ENCODE measurements at regions of chr1 and their contacts with region 1.

Region 1: GRCh38 chr1:55277377-55278130 is 62.4 kb upstream of the USP24 start:
- DNase-seq: peak; percentile 89
- ATAC-seq: peak; percentile 92

Region 2: GRCh38 chr1:54705153-54705552 is 572.4 kb before region 1 on chr1:
- intact Hi-C with region 1: no loop called
- DNase-seq: no peak
- ATAC-seq: no peak

Region 3: DNA sequence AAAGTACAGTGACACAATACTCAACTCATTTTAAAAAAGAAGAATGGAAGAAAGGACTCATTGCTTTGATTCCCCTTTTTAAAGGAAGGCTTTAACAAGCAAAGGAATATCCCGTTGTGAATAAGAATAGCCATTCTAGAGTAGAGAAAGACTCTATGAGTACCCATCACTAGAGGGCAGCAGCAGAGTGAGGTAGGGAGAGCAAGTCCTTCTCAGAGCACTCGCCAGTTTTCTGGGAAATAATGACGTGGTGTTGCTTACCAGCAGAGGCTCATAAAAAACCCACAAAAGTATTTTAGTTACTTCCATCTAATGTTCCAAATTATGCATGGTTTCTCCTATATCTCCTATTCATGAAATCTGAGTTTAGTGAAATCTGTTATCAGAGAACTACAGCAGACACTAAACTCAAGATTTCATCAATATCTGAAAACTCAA is 137.0 kb before region 1 on chr1:
- intact Hi-C with region 1: loop called (anchors 1 kb)
- DNase-seq: no peak
- ATAC-seq: peak; percentile 97

Region 4: DNA sequence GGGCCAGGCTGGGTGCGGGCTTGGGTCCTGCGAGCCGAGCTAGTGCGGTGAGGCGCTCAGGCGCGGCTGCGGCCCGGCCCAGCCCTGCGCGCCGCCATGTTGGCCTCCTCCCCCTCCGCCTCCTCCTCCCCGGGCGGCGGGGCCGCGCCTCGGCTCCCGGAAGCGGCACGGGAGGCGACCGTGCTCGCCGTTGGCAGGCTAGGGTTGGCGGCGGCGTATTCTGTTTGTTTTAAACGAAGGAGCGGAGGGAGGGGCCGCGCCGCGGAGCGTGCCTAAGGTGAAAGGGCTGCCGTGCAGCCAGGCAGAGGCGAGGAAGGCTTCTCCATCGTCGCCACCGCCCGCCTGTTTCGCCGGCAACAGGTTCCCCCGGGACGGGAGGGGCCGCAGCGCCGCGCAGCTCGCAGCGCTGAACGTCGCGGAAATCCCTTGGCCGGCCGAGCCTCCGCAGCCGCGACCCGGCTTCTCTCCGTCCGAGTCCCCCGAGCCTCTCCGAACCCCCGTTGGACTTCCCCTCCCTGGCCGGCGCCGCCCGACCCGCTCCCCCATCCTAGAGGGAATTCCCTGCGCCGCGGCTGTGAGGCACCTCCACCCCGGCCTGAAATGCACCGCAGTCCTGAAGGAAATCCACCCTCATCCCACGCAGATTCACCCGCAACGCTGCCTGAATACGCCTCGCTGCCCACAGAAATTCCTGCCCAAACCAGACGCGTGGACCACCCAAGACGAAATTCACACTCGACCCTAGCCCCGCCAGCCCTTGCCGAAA is 62.1 kb before region 1 on chr1 and contains the start of gene USP24:
- intact Hi-C with region 1: loop called (anchors 10 kb)
- DNase-seq: peak; percentile 88
- ATAC-seq: peak; percentile 96
- total RNA-seq, gene USP24: 32.9 TPM